CD4-positive, alpha-beta T cell (primary cell): ENCODE measurements at regions of chr7 and their contacts with region 1.

Region 1: GRCh38 chr7:73738612-73739374 is at the start of gene ABHD11:
- DNase-seq: peak; percentile 96 to 100 (median 99)
- ATAC-seq: peak; percentile 87
- H3K4me3 ChIP-seq: peak within 1 kb of the TSS; percentile 86
- H3K4me3 Mint-ChIP-seq: peak within 1 kb of the TSS; percentile 94
- H3K27ac ChIP-seq: peak within 1 kb of the TSS; percentile 69 to 85
- H3K27ac Mint-ChIP-seq: peak within 1 kb of the TSS; percentile 92
- H3K4me1 ChIP-seq: peaks cover 29% of the 10 kb centered on the region
- H3K4me1 Mint-ChIP-seq: peaks cover 17% of the 10 kb centered on the region
- H3K27me3 ChIP-seq: no peaks in the 10 kb centered on the region
- H3K27me3 Mint-ChIP-seq: no peaks in the 10 kb centered on the region
- CTCF ChIP-seq: no peak
- total RNA-seq, gene ABHD11: 8.5 to 11.5 TPM

Region 2: DNA sequence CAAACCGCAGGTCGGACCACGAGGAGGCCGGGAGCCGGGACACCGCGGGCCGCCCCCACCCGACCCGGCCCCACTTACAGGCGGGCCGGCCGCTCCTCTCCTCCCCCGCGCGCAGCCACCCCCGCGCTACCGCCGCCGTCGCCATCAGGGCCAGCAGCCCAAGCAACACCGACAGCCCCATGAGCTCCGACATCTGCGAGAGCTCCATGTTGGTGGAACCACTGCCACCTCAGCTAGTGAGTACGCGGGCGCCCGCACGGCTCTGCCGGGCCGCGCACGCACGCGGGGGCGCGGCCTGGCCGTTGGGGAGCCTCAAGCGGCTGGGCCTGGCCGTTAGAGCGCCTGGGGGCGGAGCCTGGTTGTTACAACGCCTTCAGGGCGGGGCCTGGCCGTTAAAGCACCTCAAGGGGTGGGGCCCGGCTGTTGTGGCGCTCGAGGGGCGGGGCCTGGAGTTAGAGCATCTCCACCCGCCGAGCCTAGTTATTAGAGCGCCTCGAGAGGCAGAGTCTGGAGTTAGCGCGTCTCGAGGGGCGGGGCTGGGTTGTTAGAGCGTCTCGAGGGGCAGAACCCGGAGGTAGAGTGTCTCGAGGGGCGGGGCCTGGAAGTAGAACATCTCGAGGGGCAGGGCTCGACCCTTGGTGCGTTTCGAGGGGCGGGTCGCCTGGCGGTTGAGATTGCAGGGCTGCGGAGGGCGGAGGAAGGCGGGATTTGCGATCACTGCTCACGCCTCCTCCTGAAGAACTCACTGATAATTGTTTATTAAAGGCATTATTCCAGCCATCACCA is 160.3 kb before region 1 on chr7 and contains the start of gene TBL2:
- CTCF ChIA-PET with region 1: interaction called, 5 read pairs
- POLR2A ChIA-PET with region 1: interaction called, 13 read pairs
- intact Hi-C with region 1: no loop called
- DNase-seq: peak; percentile 96 to 99 (median 99)
- ATAC-seq: peak; percentile 89
- H3K4me3 ChIP-seq: peak within 1 kb of the TSS; percentile 63
- H3K4me3 Mint-ChIP-seq: peak within 1 kb of the TSS; percentile 86
- H3K27ac ChIP-seq: peak within 1 kb of the TSS; percentile 78 to 88
- H3K27ac Mint-ChIP-seq: peak within 1 kb of the TSS; percentile 89
- H3K4me1 ChIP-seq: peaks cover 35% of the 10 kb centered on the region
- H3K4me1 Mint-ChIP-seq: peaks cover 23% of the 10 kb centered on the region
- H3K27me3 ChIP-seq: no peaks in the 10 kb centered on the region
- H3K27me3 Mint-ChIP-seq: no peaks in the 10 kb centered on the region
- CTCF ChIP-seq: no peak
- total RNA-seq, gene TBL2: 25.2 to 27.2 TPM

Region 3: DNA sequence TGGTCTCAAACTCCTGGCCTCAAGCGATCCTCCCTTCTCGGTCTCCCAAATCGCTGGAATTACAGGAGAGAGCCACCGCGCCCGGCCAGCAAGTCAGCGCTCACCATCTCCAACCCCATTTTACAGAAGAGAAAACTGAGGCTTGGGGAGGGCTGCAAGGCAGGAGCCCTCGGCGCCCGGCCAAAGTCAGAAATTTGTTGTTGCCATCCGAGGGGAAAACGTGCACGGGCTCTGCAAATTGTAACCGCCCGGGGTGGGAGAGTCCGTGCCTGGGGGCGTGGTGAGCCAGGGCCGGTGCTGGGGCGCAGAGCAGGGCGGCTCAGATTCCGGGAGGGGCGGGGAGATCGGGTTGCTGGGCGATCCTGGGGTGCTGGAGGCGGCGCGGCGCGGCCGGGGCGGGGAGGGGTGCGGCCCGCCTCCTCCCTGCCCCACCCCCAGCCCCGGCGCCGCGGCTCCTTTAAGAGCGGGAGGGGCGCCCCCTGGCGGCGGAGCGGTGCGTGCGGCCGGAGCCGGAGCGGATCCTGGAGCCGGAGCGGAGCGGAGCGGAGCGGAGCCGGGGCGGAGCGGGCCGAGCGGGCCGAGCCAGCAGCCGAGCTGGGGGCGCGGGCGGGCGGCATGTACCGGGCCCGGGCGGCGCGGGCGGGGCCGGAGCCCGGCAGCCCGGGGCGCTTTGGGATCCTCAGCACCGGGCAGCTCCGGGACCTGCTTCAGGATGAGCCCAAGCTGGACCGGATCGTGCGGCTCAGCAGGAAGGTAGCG is 71.3 kb before region 1 on chr7 and contains the start of gene VPS37D:
- CTCF ChIA-PET with region 1: interaction called, 8 read pairs
- POLR2A ChIA-PET with region 1: interaction called, 7 read pairs
- intact Hi-C with region 1: loop called (anchors 1 to 5 kb)
- DNase-seq: peak; percentile 85 to 97 (median 94)
- ATAC-seq: peak; percentile 91
- H3K4me3 ChIP-seq: peak within 1 kb of the TSS; percentile 51
- H3K4me3 Mint-ChIP-seq: peak within 1 kb of the TSS; percentile 82
- H3K27ac ChIP-seq: no peak within 1 kb of the TSS
- H3K27ac Mint-ChIP-seq: no peak within 1 kb of the TSS
- H3K4me1 ChIP-seq: peaks cover 14% of the 10 kb centered on the region
- H3K4me1 Mint-ChIP-seq: peaks cover 5% of the 10 kb centered on the region
- H3K27me3 ChIP-seq: peaks cover 13 to 30% of the 10 kb centered on the region in 2 experiments
- H3K27me3 Mint-ChIP-seq: peaks cover 40% of the 10 kb centered on the region
- CTCF ChIP-seq: peak; percentile 52
- total RNA-seq, gene VPS37D: 0.81 to 0.96 TPM

Region 4: GRCh38 chr7:73842247-73842895 is 103.6 kb after region 1 on chr7 and contains the start of gene METTL27:
- CTCF ChIA-PET with region 1: interaction called, 3 read pairs
- POLR2A ChIA-PET with region 1: interaction called, 7 read pairs
- intact Hi-C with region 1: loop called in 1 of 2 experiments (anchors 2 kb)
- DNase-seq: peak; percentile 79 to 94 (median 87)
- ATAC-seq: peak; percentile 99
- H3K4me3 ChIP-seq: peak within 1 kb of the TSS; percentile 71
- H3K4me3 Mint-ChIP-seq: peak within 1 kb of the TSS; percentile 90
- H3K27ac ChIP-seq: no peak within 1 kb of the TSS
- H3K27ac Mint-ChIP-seq: peak within 1 kb of the TSS; percentile 61
- H3K4me1 ChIP-seq: peaks cover 20% of the 10 kb centered on the region
- H3K4me1 Mint-ChIP-seq: peaks cover 14% of the 10 kb centered on the region
- H3K27me3 ChIP-seq: no peaks in the 10 kb centered on the region
- H3K27me3 Mint-ChIP-seq: no peaks in the 10 kb centered on the region
- CTCF ChIP-seq: no peak
- total RNA-seq, gene METTL27: 1.6 to 2.1 TPM

Region 5: GRCh38 chr7:74083117-74083876 is 344.5 kb after region 1 on chr7 and contains the start of gene LIMK1:
- CTCF ChIA-PET with region 1: no interaction called
- POLR2A ChIA-PET with region 1: no interaction called
- intact Hi-C with region 1: loop called in 1 of 2 experiments (anchors 10 kb)
- DNase-seq: peak; percentile 63 to 94 (median 82)
- ATAC-seq: peak; percentile 95
- H3K4me3 ChIP-seq: peak within 1 kb of the TSS; percentile 67
- H3K4me3 Mint-ChIP-seq: peak within 1 kb of the TSS; percentile 88
- H3K27ac ChIP-seq: no peak within 1 kb of the TSS
- H3K27ac Mint-ChIP-seq: peak within 1 kb of the TSS; percentile 62
- H3K4me1 ChIP-seq: peaks cover 20% of the 10 kb centered on the region
- H3K4me1 Mint-ChIP-seq: peaks cover 9% of the 10 kb centered on the region
- H3K27me3 ChIP-seq: no peaks in the 10 kb centered on the region
- H3K27me3 Mint-ChIP-seq: no peaks in the 10 kb centered on the region
- CTCF ChIP-seq: no peak
- total RNA-seq, gene LIMK1: 7.8 to 8.2 TPM